ENCODE measurements at regions of chr5 and their contacts with region 1.

Region 1: DNA sequence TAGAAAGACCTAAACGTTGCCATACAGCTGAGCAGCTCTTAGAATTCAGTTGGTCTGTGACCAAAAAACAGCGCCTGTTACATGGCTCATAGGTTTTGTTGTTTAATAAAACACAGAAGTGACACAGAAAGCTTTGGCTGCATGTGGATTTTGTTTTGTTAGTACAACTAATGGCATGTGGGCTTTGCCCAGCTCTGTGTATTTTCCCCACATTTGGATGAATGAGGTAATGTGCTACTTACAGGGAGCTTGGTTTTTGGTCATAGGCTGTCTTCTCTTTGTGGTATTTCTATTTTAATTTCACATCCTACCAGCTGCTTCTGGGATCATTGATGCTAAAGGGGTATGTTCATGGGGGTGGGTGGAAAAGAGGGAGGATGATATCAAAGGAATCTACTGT is 37.0 kb upstream of the POU4F3 start:
- DNase-seq: no peak
- ATAC-seq: no peak
- H3K4me3 ChIP-seq: no peak overlapping the region
- H3K27ac ChIP-seq: no peak overlapping the region
- H3K4me1 ChIP-seq: no peaks in the 10 kb centered on the region
- H3K27me3 ChIP-seq: no peaks in the 10 kb centered on the region
- CTCF ChIP-seq: no peak
- POLR2A ChIP-seq: no peak

Region 2: GRCh38 chr5:146283344-146283761 is 18.3 kb before region 1 on chr5:
- in situ Hi-C with region 1: no loop called
- intact Hi-C with region 1: no loop called
- DNase-seq: no peak
- ATAC-seq: peak in 1 of 2 donors; percentile 81
- H3K4me3 ChIP-seq: no peak overlapping the region
- H3K27ac ChIP-seq: peak overlapping the region in 1 of 4 donors; percentile 3
- H3K4me1 ChIP-seq: peaks cover 9 to 10% of the 10 kb centered on the region in 2 donors
- H3K27me3 ChIP-seq: no peaks in the 10 kb centered on the region
- CTCF ChIP-seq: no peak
- POLR2A ChIP-seq: no peak

Region 3: DNA sequence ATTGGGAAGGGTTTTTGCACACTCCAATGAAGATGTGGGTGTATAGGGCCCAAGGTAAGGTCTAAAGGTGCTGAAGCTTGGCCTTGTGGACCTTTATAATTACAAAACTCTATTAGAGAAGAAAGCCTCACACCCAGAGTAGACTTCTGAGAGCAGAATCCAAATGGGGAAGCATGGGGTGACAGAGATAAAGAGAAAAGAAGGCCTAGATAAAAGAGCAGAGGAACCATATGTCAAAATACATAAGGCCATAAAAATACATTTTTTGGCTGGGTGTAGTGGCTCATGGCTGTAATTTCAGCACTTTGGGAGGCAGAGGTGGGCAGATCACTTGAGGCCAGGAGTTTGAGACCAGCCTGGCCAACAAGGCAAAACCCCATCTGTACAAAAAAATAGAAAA is 118.1 kb after region 1 on chr5:
- in situ Hi-C with region 1: loop called in 1 of 4 experiments (anchors 5 kb)
- intact Hi-C with region 1: no loop called
- DNase-seq: no peak
- ATAC-seq: no peak
- H3K4me3 ChIP-seq: no peak overlapping the region
- H3K27ac ChIP-seq: no peak overlapping the region
- H3K4me1 ChIP-seq: no peaks in the 10 kb centered on the region
- H3K27me3 ChIP-seq: no peaks in the 10 kb centered on the region
- CTCF ChIP-seq: no peak
- POLR2A ChIP-seq: no peak

Region 4: DNA sequence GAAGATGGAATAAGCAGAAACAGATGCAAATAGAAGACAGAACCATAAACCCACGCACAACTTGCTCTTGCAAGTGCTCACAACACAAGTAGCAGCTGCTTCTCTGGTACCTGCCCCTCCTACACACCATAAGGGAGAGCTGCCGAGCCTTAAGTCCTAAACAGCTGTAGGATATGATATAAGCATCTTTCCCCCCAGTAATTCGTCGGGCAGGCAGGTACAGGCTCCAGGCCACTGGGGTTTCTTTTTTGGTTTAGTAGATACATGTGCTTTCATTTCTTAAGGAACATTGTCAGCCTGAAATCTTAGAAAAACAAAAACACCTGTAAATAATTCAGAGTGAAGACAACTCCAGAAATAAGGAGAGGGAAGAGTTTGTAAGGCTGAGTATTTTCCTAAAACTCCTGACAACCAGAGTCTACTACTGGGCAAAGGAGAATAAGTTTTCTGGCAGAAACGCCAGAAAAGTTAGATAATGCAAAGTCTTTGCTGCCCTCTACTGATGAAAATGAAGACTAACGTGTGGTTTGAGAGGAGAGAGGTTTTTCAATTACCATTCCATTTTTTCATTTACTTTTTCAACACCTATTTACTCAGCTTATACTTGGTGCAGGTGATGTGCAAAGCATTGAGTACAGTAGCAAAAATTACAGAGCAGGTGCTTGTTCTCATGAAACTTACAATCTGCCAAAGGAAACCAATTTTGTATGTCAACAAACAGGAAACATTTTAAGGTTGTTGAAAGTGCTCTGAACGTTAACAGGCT is 125.4 kb after region 1 on chr5:
- in situ Hi-C with region 1: loop called in 1 of 4 experiments (anchors 5 kb)
- intact Hi-C with region 1: no loop called
- DNase-seq: no peak
- ATAC-seq: peak in 1 of 2 donors; percentile 74
- H3K4me3 ChIP-seq: no peak overlapping the region
- H3K27ac ChIP-seq: no peak overlapping the region
- H3K4me1 ChIP-seq: no peaks in the 10 kb centered on the region
- H3K27me3 ChIP-seq: no peaks in the 10 kb centered on the region
- CTCF ChIP-seq: peak in 4 of 5 experiments; percentile 54 to 69 (median 62)
- POLR2A ChIP-seq: no peak